ENCODE measurements at regions of chr5 and their contacts with region 1.

Region 1: DNA sequence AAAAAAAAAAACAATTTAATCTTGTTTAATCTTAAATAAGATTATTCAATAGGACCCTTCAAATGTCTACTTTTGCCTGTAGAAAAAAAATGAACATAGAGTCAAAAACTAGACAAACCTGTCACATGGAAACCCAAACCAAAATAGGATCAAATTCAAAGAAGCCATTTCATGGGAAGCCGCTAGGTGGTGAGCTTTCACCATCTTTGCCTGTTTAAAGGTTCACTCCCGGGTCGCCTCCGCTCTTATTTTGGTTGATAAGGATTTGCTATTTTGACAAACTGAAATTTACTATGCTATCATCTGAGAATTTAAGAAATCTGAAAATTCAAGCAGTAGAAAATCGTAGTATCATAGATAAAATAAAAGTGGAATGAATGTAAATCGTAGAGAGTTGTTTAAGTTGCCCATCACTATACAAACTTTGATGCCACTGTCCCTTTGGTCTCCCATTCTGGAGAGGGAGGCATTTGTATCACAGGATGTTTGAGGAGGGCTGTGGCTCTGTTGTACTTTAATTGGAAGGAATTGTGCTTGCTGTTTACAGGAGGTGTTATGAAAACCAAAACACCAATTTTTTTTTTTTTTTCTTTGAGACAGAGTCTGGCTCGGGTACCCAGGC is 43.5 kb upstream of the DNAH5 start:
- DNase-seq: peak in 2 of 4 donors; percentile 36 to 66
- ATAC-seq: peak; percentile 90
- H3K4me3 ChIP-seq: no peak overlapping the region
- H3K27ac ChIP-seq: no peak overlapping the region
- H3K4me1 ChIP-seq: peaks cover 0 to 6% of the 10 kb centered on the region in 2 donors
- H3K27me3 ChIP-seq: peaks cover 0 to 4% of the 10 kb centered on the region in 2 donors
- CTCF ChIP-seq: peak; percentile 58 to 78

Region 2: DNA sequence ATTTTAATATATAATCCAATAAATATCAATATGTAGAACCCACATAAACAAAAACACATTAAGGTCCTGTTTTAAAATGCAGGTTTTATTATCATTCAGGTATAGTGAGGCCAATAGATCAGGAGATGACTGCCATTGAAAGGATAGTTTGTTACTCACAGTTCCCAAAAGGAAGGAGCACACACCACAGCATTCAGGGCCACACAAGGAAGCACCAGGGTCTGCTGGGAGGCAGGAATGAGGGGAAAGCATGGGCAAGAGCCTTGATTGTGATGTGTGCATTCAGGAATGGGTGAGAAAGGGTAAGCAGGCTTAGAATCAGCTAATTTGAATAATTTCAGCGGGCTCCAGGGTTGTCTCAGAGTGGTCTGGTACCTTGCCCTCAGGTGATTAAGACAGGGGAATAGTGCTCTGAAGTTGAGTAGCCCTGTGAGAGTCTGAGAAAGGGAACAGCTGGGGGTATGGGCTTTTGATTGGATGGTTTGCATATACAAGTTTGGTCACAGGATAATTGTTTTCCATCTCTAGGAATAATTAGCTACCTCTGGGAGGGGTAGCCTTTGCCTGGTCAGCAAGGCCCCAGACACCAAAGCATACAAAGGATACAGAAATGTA is 656.8 kb after region 1 on chr5:
- intact Hi-C with region 1: loop called in 1 of 2 experiments (anchors 5 kb)
- DNase-seq: no peak
- ATAC-seq: no peak
- H3K4me3 ChIP-seq: no peak overlapping the region
- H3K27ac ChIP-seq: no peak overlapping the region
- H3K4me1 ChIP-seq: peaks cover 0 to 6% of the 10 kb centered on the region in 2 donors
- H3K27me3 ChIP-seq: peaks cover 0 to 5% of the 10 kb centered on the region in 2 donors
- CTCF ChIP-seq: no peak

Measured in left lung (tissue), 14 donors.